ENCODE measurements at regions of chr12 and their contacts with region 1.

Region 1: DNA sequence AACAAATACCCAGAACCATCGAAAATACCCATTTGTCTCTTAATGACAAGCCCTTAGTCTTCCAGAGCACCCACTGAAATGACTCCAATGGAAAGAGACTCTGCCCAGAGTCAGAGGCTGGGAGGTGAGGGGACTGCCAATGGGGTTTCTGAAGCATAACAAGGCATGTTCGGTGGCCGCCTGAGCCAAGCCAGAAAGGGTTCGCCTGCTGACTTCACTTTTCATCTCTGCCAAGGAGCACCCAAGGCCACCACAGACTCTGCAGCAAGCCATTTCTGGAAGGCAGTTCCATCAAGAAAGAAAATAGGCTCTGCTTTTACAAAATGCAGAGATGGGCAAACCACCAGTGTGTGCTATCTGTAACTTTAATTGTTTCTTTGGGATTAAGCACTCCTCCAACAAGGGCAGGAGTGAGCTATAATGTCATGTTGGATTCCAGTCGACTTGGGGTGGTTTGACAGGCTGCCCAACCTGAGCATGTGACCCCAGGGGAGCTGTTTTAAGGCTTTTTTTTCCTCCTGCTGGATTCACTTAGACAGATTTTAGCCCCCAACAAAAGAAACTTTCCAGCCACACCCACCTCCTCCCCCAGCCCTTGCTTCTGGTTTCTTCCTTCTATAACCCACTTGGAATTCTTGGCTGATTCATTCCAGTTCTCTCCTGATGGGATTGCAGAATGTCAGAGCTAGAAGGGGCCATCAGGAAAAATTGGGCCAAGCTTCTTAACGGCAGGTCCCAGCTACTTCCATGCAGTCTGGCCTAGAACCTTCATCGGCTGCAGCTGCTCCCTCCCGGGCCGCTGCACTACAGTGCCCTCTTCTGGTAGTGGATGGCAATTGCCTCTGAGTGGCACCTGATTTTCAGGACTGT is 24.1 kb downstream of the CKAP4 start:
- DNase-seq: peak; percentile 86
- H3K4me3 Mint-ChIP-seq: no peak overlapping the region
- H3K27ac Mint-ChIP-seq: no peak overlapping the region
- H3K4me1 Mint-ChIP-seq: peaks cover 18% of the 10 kb centered on the region
- H3K27me3 Mint-ChIP-seq: peaks cover 3% of the 10 kb centered on the region

Region 2: GRCh38 chr12:105420659-105421240 is 803.0 kb before region 1 on chr12:
- CTCF ChIA-PET with region 1: interaction called, 17 read pairs
- intact Hi-C with region 1: loop called (anchors 1 kb)
- DNase-seq: peak; percentile 84
- H3K4me3 Mint-ChIP-seq: no peak overlapping the region
- H3K27ac Mint-ChIP-seq: no peak overlapping the region
- H3K4me1 Mint-ChIP-seq: peaks cover 10% of the 10 kb centered on the region
- H3K27me3 Mint-ChIP-seq: no peaks in the 10 kb centered on the region

Region 3: DNA sequence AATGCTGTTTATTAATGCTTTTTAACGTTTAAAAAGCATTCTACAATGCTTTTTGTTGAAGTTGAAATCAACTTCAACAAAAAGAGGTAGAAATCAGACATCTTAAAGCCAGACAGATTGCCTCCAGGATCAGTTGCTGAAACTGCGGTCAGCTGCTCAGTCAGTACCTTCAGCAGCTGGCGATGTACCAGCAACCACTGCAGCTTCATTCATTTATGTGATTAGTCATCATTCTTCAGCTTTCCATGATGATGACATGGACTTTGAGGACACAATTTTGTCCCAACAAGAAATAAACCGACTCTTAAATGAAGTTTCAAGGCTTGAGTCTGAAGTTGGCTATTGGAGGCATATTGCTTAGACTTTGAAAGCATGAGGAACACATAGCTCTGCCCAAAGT is 53.4 kb before region 1 on chr12:
- CTCF ChIA-PET with region 1: interaction called, 5 read pairs
- intact Hi-C with region 1: loop called (anchors 5 kb)
- DNase-seq: no peak
- H3K4me3 Mint-ChIP-seq: no peak overlapping the region
- H3K27ac Mint-ChIP-seq: no peak overlapping the region
- H3K4me1 Mint-ChIP-seq: no peaks in the 10 kb centered on the region
- H3K27me3 Mint-ChIP-seq: peaks cover 12% of the 10 kb centered on the region

Region 4: DNA sequence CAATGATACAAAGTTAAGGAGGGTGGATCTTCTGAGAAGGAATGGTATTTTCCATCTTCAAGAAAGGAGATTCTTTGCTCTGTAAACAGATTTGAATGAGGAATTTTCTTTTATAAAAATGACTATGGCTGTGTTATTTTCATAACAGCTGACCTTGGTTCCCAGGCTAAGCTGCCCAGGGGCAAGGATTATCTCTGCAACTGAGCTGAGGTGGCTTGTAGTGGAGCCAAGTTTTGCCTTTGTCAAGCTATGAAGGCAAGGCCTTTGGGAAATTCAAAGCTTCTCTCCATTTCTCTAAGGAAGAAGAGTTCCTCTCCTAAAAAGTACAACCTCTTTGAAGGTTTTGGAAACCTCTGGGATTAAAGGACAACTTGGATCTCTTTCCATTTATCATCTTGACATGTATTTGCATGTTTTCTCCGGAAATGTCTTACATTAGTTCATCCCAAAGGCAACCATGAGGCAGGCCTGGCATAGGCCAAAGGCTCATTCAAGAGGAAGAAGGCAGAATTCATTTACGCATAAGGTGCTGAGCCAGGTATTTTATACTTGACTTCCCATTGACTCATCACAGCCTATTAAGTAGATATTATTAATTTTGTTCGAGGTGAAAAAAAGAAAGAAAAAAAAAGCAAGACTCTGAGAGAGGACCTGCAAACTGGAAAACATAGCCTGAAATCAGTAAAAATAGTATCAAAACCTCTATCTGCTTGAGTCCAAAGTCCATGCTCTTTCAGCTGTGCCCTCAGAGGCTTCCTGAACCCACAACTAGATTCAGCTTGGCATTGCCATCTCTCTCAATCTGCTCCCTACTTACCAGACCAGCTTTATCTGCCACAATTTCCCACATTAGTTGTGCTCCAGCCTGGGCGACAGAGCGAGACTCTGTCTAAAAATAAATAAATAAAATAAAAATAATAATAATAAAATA is 48.1 kb after region 1 on chr12:
- CTCF ChIA-PET with region 1: interaction called, 13 read pairs
- intact Hi-C with region 1: no loop called
- DNase-seq: no peak
- H3K4me3 Mint-ChIP-seq: no peak overlapping the region
- H3K27ac Mint-ChIP-seq: no peak overlapping the region
- H3K4me1 Mint-ChIP-seq: no peaks in the 10 kb centered on the region
- H3K27me3 Mint-ChIP-seq: no peaks in the 10 kb centered on the region

Region 5: DNA sequence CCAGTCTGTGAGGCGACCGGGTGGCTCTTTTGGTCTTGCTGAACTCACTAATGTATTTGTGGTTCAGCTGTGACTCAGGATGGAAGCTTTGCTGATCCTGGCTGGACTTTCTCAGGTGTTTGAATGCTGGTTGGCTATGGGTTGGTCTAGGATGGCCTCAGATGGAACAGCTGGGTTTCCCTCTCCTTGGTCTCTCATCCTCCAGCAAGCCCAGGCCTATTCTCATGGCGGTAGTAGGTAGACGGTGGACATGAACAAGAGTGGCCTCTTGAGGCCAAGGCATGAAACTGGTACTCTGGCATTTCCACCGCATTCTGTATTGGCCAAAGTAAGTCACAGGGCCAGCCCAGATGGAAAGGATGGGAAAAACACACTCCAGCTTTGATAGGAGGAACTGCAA is 122.0 kb after region 1 on chr12:
- CTCF ChIA-PET with region 1: no interaction called
- intact Hi-C with region 1: loop called (anchors 1 kb)
- DNase-seq: peak; percentile 15
- H3K4me3 Mint-ChIP-seq: no peak overlapping the region
- H3K27ac Mint-ChIP-seq: no peak overlapping the region
- H3K4me1 Mint-ChIP-seq: no peaks in the 10 kb centered on the region
- H3K27me3 Mint-ChIP-seq: no peaks in the 10 kb centered on the region

Region 6: GRCh38 chr12:106386813-106387535 is 163.3 kb after region 1 on chr12:
- CTCF ChIA-PET with region 1: no interaction called
- intact Hi-C with region 1: no loop called
- DNase-seq: no peak
- H3K4me3 Mint-ChIP-seq: no peak overlapping the region
- H3K27ac Mint-ChIP-seq: no peak overlapping the region
- H3K4me1 Mint-ChIP-seq: no peaks in the 10 kb centered on the region
- H3K27me3 Mint-ChIP-seq: no peaks in the 10 kb centered on the region

Region 7: DNA sequence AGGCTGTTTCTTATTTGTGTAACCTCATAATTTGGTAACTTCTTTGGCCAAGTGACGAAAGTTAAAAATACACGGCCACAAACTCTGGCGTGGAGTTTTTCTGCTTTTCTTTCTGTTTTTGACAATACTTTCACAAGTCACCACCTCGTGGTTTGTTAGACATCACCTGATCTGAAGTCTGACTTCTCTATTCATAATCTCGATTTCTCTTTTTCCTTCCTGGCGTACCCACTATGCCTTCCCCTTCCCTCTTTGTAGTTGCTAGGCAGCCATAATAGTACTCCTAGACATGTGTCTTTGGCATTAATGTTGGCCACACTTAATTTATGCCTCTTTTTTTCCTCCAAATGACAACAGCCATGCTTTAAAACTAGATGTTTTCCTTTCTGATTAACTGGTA is 231.4 kb after region 1 on chr12:
- CTCF ChIA-PET with region 1: no interaction called
- intact Hi-C with region 1: no loop called
- DNase-seq: no peak
- H3K4me3 Mint-ChIP-seq: no peak overlapping the region
- H3K27ac Mint-ChIP-seq: no peak overlapping the region
- H3K4me1 Mint-ChIP-seq: no peaks in the 10 kb centered on the region
- H3K27me3 Mint-ChIP-seq: no peaks in the 10 kb centered on the region

Region 8: GRCh38 chr12:106919910-106920544 is 696.3 kb after region 1 on chr12:
- CTCF ChIA-PET with region 1: no interaction called
- intact Hi-C with region 1: loop called (anchors 2 kb)
- DNase-seq: peak; percentile 23
- H3K4me3 Mint-ChIP-seq: no peak overlapping the region
- H3K27ac Mint-ChIP-seq: no peak overlapping the region
- H3K4me1 Mint-ChIP-seq: peaks cover 8% of the 10 kb centered on the region
- H3K27me3 Mint-ChIP-seq: peaks cover 5% of the 10 kb centered on the region

Region 9: DNA sequence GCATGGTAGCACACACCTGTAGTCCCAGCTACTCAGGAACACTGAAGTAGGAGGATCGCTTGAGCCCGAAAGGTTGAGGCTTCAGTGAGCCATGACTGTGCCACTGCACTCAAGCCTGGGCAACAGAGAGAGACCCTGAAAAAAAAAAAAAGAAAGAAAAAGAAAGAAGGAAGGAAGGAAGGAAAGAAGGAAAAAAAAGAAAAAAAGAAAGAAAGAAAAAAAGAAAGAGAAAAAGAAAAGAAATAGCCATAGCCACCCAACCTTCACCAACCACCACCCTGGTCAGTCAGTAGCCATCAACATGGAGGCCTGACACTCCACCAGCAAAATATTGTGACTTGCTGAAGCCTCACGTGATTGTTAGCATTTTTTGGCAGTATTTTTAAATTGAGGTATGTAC is 710.6 kb after region 1 on chr12:
- CTCF ChIA-PET with region 1: no interaction called
- intact Hi-C with region 1: no loop called
- DNase-seq: no peak
- H3K4me3 Mint-ChIP-seq: no peak overlapping the region
- H3K27ac Mint-ChIP-seq: no peak overlapping the region
- H3K4me1 Mint-ChIP-seq: no peaks in the 10 kb centered on the region
- H3K27me3 Mint-ChIP-seq: peaks cover 7% of the 10 kb centered on the region

Measured in activated naive CD4-positive, alpha-beta T cell treated with anti-CD3 and anti-CD28 coated beads for 36 hours (primary cell).